HAP-1 (cell line): ENCODE measurements at regions of chr1 and their contacts with region 1.

Region 1: DNA sequence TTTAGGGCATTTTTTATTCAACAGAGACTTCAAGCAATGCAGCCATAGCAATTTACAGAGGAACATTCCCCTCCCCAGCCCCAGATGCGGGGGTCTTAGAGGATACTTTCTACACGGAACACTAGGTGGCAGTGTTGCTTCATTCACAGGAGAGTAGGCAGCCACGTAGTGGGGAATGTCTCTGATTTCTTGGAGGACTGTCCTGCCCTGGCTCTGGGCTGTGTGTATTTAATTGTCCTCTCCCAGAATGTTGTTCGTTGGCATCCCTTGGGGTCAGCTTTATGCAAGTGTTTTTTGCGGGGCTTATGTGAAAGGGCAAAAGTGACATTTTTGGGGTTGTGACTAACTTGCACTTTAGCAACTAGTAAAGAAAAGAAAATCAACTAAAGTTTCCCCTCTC is 96.9 kb downstream of the PAPPA2 start:
- DNase-seq: peak; percentile 27 to 67
- H3K4me3 ChIP-seq: no peak overlapping the region
- H3K4me1 ChIP-seq: no peaks in the 10 kb centered on the region
- H3K27me3 ChIP-seq: 0 out of 2 replicates have a peak, but pooled peaks cover 3% of the 10 kb centered on the region

Region 2: DNA sequence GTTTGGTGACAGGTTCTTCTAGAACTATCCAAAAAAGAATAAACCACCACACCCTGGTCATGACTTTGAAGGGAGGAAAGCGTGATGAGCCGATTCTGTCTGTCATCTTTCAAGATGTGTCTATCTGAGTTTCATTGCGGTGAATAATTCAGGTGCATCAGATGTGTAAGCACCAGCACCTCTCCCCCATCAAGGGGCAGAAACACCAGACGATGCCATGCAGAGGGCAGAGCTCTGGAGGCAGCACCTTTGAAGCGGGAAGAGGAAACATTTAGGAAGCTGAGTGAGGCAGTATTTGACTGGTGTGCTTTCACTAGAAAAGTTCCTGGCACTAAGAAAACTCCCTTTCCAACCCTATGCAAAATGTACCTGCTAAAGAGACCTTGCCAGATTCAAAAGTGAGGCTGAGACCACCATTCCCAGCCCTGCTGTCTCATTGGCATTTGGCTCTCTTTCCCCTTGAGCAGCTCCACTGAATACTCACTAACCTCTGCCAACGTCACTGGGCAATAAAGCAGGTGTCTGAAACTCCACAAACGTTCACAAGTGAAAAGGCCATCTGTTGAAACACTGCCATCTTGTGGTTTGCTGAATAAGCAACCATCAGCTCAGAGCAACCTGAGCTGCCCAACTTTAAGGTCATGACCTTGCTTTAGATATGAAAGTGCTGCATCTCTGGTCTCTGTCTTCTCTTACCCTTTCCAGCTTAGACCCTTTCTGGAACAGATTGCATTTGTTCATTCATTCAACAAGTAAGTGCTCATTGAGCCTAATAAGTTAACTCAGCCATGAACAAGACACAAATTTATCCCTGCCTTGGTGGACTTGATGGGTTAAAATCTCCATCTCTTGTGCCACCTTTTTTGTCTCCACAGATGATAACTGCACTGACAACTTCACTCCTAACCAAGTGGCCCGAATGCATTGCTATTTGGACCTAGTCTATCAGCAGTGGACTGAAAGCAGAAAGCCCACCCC is 131.7 kb after region 1 on chr1:
- in situ Hi-C with region 1: loop called (anchors 10 kb)
- DNase-seq: peak; percentile 28 to 39
- H3K4me3 ChIP-seq: no peak overlapping the region
- H3K4me1 ChIP-seq: no peaks in the 10 kb centered on the region
- H3K27me3 ChIP-seq: no peaks in the 10 kb centered on the region

Region 3: GRCh38 chr1:176880954-176881595 is 321.2 kb after region 1 on chr1:
- in situ Hi-C with region 1: loop called (anchors 5 kb)
- DNase-seq: peak; percentile 40 to 87
- H3K4me3 ChIP-seq: no peak overlapping the region
- H3K4me1 ChIP-seq: no peaks in the 10 kb centered on the region
- H3K27me3 ChIP-seq: no peaks in the 10 kb centered on the region